Activated CD4-positive, alpha-beta memory T cell treated with anti-CD3 and anti-CD28 coated beads for 36 hours (primary cell): ENCODE measurements at regions of chr12 and their contacts with region 1.

Region 1: DNA sequence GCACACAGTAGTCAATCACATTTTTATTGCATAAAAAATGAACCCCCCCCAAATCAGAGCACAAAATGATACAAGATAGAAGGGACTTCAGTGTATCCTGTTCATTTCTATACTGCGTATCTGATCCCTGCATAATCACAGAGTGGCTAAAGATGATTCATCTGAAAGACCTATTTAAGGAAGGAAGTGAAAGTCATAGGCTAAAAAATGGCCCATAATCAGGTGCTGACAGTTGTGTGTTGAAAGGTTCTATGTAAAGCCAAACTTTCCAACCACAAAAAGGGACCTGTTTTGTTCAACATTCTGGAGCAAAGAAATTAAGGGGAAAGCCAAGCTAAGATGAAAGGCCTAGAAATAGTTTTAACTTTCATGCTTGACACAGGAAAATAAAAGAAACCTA is 147.8 kb upstream of the ATP2B1 start:
- DNase-seq: no peak
- H3K4me3 Mint-ChIP-seq: no peak overlapping the region
- H3K27ac Mint-ChIP-seq: peak overlapping the region; percentile 43
- H3K4me1 Mint-ChIP-seq: peaks cover 52% of the 10 kb centered on the region
- H3K27me3 Mint-ChIP-seq: no peaks in the 10 kb centered on the region

Region 2: GRCh38 chr12:90102957-90103652 is 246.7 kb after region 1 on chr12:
- CTCF ChIA-PET with region 1: no interaction called
- POLR2A ChIA-PET with region 1: no interaction called
- intact Hi-C with region 1: loop called (anchors 5 kb)
- DNase-seq: peak; percentile 13
- H3K4me3 Mint-ChIP-seq: peak overlapping the region; percentile 19
- H3K27ac Mint-ChIP-seq: no peak overlapping the region
- H3K4me1 Mint-ChIP-seq: peaks cover 13% of the 10 kb centered on the region
- H3K27me3 Mint-ChIP-seq: no peaks in the 10 kb centered on the region